ENCODE measurements at regions of chr6 and their contacts with region 1.

Region 1: DNA sequence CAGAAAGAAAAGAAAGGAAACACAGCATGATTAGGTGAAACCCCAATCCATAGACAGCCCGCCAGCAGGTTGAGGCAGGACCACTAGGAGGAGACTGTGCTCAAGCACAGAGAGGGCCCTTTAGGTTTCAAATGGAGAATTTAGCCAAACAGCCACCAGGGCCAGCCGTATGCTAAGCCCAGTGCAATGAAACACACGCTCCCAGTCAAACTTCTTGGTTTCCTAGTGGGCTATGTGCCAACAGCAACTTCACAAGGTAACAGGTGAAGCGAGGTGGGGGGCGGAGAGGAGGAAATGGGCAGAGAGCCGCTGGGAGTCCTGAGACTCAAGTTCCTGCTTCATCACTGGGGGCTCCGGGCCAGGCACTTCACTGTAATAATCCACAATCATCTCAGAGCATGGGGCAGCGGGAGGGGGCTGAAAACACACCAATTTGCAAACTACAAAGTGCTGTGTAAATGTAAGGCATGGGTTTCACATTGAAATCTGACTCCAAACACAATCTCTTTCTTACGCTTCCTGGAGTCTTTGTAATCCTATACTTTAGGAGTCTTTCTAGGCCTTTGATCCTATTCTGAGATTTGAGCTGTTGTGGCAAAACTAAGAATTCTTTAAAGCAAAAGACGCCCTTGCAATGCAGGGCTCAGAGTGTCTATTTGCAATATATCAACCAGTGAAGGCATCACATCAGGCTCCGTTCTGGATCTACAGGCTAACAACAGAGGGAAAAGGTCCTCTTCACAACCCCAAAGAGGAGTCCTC is 117.3 kb downstream of the OPRM1 start:
- DNase-seq: no peak
- H3K4me3 ChIP-seq: no peak overlapping the region
- H3K27ac ChIP-seq: no peak overlapping the region
- H3K4me1 ChIP-seq: peaks cover 0 to 22% (median 16%) of the 10 kb centered on the region in 3 donors
- H3K27me3 ChIP-seq: no peaks in the 10 kb centered on the region
- CTCF ChIP-seq: peak; percentile 29 to 74 (median 66)
- POLR2A ChIP-seq: no peak

Region 2: GRCh38 chr6:154247119-154247861 is 91.0 kb after region 1 on chr6:
- intact Hi-C with region 1: no loop called
- DNase-seq: no peak
- H3K4me3 ChIP-seq: peak overlapping the region; percentile 25 to 59 (median 36)
- H3K27ac ChIP-seq: peak overlapping the region; percentile 41 to 73 (median 56)
- H3K4me1 ChIP-seq: peaks cover 9 to 56% (median 10%) of the 10 kb centered on the region in 3 donors
- H3K27me3 ChIP-seq: no peaks in the 10 kb centered on the region
- CTCF ChIP-seq: no peak
- POLR2A ChIP-seq: peak in 1 of 4 donors; percentile 27

Region 3: GRCh38 chr6:154276810-154277628 is 120.7 kb after region 1 on chr6:
- intact Hi-C with region 1: loop called (anchors 5 kb)
- DNase-seq: no peak
- H3K4me3 ChIP-seq: no peak overlapping the region
- H3K27ac ChIP-seq: no peak overlapping the region
- H3K4me1 ChIP-seq: peaks cover 0 to 13% (median 0%) of the 10 kb centered on the region in 3 donors
- H3K27me3 ChIP-seq: no peaks in the 10 kb centered on the region
- CTCF ChIP-seq: peak; percentile 42 to 81 (median 69)
- POLR2A ChIP-seq: no peak